Heart right ventricle (tissue), 16 donors: ENCODE measurements at regions of chr5 and their contacts with region 1.

Region 1: GRCh38 chr5:113330533-113331208 is 104.1 kb downstream of the TSSK1B start:
- DNase-seq: peak; percentile 31 to 34
- ATAC-seq: peak; percentile 66 to 92 (median 74)
- H3K4me3 ChIP-seq: no peak overlapping the region
- H3K27ac ChIP-seq: peak overlapping the region in 1 of 10 donors; percentile 35
- H3K4me1 ChIP-seq: peaks cover 0 to 15% (median 9%) of the 10 kb centered on the region in 9 donors
- H3K27me3 ChIP-seq: no peaks in the 10 kb centered on the region
- CTCF ChIP-seq: peak; percentile 37 to 71 (median 51)

Region 2: DNA sequence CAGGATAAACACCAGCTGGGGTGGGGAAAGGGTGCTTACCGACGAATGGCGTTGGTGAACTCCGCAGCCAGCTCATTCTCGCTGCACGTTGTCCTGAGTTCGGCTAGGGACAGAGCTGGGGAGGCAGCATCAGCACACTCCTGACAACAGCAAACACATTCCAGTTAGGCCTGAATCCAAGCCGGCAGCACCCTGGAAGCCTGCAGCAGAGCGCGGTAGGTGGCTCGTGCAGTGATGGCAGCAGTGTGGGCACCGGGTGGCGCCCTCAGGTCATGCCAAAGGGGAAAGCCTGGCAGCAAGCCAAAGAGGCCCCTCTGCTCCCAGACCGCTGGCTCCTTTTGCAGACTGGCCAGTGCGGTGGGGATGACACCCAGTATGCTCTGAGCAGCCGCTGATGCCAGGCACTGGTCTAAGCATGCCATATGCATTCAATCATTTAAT is 287.2 kb before region 1 on chr5:
- intact Hi-C with region 1: loop called in 4 of 10 experiments (anchors 2 to 10 kb)
- DNase-seq: peak; percentile 70 to 76
- ATAC-seq: peak; percentile 77 to 96 (median 94)
- H3K4me3 ChIP-seq: no peak overlapping the region
- H3K27ac ChIP-seq: peak overlapping the region in 7 of 10 donors; percentile 10 to 68 (median 50)
- H3K4me1 ChIP-seq: peaks cover 4 to 27% (median 17%) of the 10 kb centered on the region in 9 donors
- H3K27me3 ChIP-seq: no peaks in the 10 kb centered on the region
- CTCF ChIP-seq: peak; percentile 15 to 64 (median 40)